Activated CD8-positive, alpha-beta memory T cell treated with anti-CD3 and anti-CD28 coated beads, Interleukin-2, amount 10 ng/mL, durations not matched to agents 7 days and 5 days (primary cell): ENCODE measurements at regions of chr14 and their contacts with region 1.

Region 1: DNA sequence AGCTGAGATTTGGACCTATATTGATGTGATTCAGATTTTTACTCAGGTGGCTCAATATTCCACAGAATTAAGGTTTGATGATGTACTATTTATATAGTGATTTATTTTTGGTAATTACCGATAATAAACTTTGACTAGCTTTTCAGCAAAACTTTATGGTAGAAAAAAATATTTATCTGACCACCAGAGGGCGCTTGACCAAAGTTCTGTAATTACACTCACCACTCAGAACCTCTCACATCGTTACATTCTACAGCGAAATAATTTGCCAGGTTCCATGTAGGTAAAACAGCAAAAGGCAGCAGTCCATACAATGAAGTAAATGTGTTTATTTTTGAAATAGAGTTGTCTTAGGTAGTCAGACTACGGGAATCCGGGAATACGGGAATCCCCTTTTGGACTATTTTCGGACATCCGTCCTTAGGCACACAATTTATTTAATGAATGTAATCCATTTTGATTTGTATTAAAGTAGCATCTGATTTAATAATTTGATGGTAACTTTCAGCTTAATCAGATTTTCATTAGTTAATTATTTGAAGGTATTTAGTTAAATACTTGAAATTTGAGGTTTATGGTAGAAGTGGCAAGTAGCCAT is 143.0 kb upstream of the DDHD1 start:
- DNase-seq: no peak
- ATAC-seq: no peak
- H3K4me3 Mint-ChIP-seq: no peak overlapping the region
- H3K27ac Mint-ChIP-seq: no peak overlapping the region
- H3K4me1 Mint-ChIP-seq: no peaks in the 10 kb centered on the region
- H3K27me3 Mint-ChIP-seq: no peaks in the 10 kb centered on the region

Region 2: GRCh38 chr14:53278930-53279506 is 17.1 kb before region 1 on chr14:
- CTCF ChIA-PET with region 1: interaction called, 12 read pairs
- DNase-seq: no peak
- ATAC-seq: no peak
- H3K4me3 Mint-ChIP-seq: no peak overlapping the region
- H3K27ac Mint-ChIP-seq: no peak overlapping the region
- H3K4me1 Mint-ChIP-seq: no peaks in the 10 kb centered on the region
- H3K27me3 Mint-ChIP-seq: no peaks in the 10 kb centered on the region

Region 3: DNA sequence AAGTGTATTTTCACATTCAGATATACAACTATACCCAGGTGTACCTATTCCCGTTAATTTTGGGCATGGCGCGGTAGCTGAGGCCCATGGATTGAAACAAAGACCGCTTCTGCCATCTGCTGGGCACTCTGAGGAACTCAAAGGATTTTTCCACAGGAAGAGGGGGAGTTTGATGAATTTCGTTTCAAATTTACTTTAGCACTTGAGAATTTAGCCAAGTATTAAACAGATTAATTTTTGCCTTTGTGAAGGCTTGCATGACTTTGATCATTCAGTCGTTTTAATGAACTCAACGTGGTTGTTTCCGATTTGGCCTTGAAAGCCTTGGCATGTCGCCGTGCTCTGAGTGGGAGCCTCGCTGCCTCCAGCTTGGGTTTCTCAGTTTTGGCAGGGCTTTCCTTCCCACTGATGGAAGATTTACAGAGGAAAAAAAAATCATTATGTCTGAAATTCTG is 10.2 kb after region 1 on chr14:
- CTCF ChIA-PET with region 1: interaction called, 21 read pairs
- DNase-seq: peak; percentile 47
- ATAC-seq: peak; percentile 55
- H3K4me3 Mint-ChIP-seq: peak overlapping the region; percentile 54
- H3K27ac Mint-ChIP-seq: no peak overlapping the region
- H3K4me1 Mint-ChIP-seq: peaks cover 18% of the 10 kb centered on the region
- H3K27me3 Mint-ChIP-seq: peaks cover 3% of the 10 kb centered on the region

Region 4: GRCh38 chr14:53380052-53380866 is 84.2 kb after region 1 on chr14:
- CTCF ChIA-PET with region 1: no interaction called
- DNase-seq: no peak
- ATAC-seq: no peak
- H3K4me3 Mint-ChIP-seq: no peak overlapping the region
- H3K27ac Mint-ChIP-seq: no peak overlapping the region
- H3K4me1 Mint-ChIP-seq: peaks cover 5% of the 10 kb centered on the region
- H3K27me3 Mint-ChIP-seq: no peaks in the 10 kb centered on the region